ENCODE measurements at regions of chr11 and their contacts with region 1.

Region 1: DNA sequence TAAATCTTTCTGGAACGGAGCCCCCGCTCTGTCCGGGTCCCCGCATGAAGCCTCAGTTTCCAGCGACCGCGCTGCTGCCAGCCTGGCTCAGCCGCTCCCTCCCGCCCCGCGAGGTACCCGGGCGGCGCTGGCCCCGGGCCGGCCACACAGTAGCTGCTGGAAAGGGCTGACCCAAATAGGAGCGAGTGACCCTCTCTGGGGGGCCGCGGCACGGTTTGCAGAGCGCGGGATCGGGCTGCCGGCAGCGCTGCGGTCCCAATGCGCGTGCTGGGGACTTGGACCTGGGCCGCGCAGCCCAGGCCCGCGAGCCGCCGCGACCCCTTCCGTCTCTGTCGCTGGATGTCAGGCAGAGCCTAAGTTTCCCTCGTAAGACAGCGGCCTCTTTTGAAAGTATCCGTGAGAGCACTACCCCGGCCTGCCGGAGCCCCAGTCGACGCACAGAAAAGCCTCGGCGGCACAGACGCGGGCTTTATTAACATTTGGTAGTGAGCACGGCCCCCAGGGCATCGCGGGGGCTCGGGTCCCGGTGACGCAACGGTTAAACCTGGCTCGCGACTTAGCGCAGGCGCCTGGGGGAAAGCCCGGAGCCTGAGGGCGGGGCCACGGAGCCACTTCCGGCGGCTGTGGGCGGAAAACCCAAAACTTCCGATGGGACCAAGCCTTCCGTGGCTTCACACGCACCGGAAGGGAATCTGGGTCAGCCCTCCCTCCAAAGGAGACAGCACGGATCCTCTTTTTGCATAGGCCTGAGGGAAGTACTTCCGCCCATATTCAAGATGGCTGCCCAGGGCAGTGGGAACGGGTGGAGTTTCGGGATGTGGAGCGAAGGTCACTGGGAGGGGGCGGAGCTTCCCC is 14.9 kb downstream of the BAD start:
- DNase-seq: peak; percentile 98
- H3K4me3 ChIP-seq: peak overlapping the region; percentile 70
- H3K4me1 ChIP-seq: peaks cover 4% of the 10 kb centered on the region; the same call in 1 of the 2 replicates
- H3K27me3 ChIP-seq: no peaks in the 10 kb centered on the region

Region 2: DNA sequence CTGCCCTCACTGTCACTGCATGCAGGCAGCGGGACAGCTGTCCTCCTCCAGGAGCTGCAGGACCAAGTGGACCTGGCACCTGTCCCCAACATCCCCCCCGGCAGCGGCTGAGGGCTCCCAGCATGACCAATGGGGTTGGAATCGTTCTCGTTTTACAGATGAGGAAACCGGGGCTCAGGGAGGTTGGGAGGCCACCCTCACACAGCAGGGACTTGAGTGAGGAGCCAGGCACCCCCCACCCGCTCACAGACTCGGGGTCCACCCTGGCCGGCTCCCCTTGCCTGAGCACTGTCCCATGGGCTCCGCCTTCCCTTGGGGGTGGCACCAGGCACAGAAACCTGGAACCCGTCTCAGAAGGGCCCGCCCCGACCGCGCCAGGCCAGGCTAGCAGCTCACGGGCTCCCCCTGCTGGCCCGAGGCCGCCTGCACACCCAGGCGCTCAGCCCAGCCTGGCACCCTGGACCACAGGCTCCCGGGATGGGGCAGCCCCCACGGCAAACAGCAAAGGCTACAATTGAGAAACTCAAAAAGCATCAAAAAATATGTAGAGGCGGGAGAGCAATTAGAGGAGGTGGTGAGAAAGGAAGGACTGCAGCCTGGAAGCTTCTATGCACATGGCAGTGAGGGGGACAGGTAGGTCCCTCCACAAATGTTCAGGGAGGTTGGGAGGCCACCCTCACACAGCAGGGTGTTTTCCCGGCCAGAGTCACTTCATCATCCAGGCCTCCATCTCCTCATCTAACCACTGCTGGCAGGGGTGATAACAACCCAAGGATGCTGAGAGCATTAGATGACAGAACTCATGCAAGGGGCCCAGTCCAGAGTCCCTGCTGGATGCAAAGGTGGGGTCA is 116.5 kb before region 1 on chr11:
- in situ Hi-C with region 1: no loop called
- DNase-seq: peak; percentile 21 to 80
- H3K4me3 ChIP-seq: no peak overlapping the region
- H3K4me1 ChIP-seq: peaks cover 7% of the 10 kb centered on the region; the same call in 1 of the 2 replicates
- H3K27me3 ChIP-seq: no peaks in the 10 kb centered on the region

Region 3: DNA sequence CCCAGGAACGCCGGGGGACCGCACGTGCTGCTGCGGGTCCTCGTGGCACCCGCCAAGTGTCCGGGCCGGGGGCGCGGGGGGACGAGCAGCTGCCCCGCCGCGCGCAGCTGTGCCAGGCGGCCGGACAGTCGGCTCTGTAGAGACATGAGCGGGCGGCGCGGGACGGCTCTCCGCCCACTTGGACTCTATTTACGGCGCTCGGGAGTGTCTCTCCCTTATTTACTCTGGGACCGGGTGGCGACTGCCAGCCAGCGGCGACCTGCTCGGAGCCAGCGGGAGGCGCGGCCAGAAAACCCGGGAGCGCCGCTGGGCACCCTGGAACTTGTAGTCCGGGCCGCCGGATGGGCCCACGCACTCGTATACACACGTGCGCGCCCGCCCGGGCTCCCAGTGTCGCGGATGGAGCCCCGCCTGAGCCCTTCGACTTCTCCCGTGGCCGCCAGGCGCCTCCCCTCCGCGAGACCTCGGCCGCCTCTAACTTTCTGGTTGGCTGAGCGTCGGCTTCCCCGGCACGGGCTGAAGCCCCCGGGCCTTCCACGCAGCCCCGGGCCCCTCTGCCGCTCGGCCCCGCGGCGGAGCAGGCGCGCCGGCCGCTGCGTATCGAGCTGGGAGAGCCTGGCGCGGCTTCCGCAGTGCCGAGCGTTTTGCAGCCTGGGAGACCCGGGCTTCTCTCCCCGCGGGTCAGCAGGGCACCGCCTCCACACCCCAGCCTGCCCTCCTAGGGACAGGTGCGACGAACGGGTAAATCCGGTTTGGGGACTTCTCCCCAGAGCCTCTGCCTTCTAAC is 103.6 kb before region 1 on chr11 and contains the start of gene MACROD1:
- in situ Hi-C with region 1: no loop called
- DNase-seq: peak; percentile 86 to 91
- H3K4me3 ChIP-seq: peak within 1 kb of the TSS; percentile 52
- H3K4me1 ChIP-seq: peaks cover 15% of the 10 kb centered on the region
- H3K27me3 ChIP-seq: no peaks in the 10 kb centered on the region

Region 4: GRCh38 chr11:64814712-64815187 is 545.1 kb after region 1 on chr11:
- in situ Hi-C with region 1: no loop called
- DNase-seq: no peak
- H3K4me3 ChIP-seq: no peak overlapping the region
- H3K4me1 ChIP-seq: no peaks in the 10 kb centered on the region
- H3K27me3 ChIP-seq: no peaks in the 10 kb centered on the region

Region 5: GRCh38 chr11:65117216-65118096 is 847.8 kb after region 1 on chr11 and contains the start of gene ZNHIT2:
- in situ Hi-C with region 1: loop called (anchors 25 kb)
- DNase-seq: peak; percentile 96 to 100
- H3K4me3 ChIP-seq: peak within 1 kb of the TSS; percentile 88
- H3K4me1 ChIP-seq: peaks cover 28% of the 10 kb centered on the region
- H3K27me3 ChIP-seq: no peaks in the 10 kb centered on the region

Measured in HAP-1 (cell line).